Activated CD4-positive, alpha-beta T cell treated with anti-CD3 and anti-CD28 coated beads for 36 hours (primary cell): ENCODE measurements at regions of chr2 and their contacts with region 1.

Region 1: GRCh38 chr2:27079233-27080139 is 1.1 kb downstream of the EMILIN1 start:
- DNase-seq: no peak
- ATAC-seq: no peak
- H3K4me3 Mint-ChIP-seq: no peak overlapping the region
- H3K27ac Mint-ChIP-seq: peak overlapping the region; percentile 83
- H3K4me1 Mint-ChIP-seq: peaks cover 43% of the 10 kb centered on the region
- H3K27me3 Mint-ChIP-seq: no peaks in the 10 kb centered on the region

Region 2: GRCh38 chr2:26970244-26970920 is 109.1 kb before region 1 on chr2 and contains the start of gene MAPRE3:
- CTCF ChIA-PET with region 1: no interaction called
- POLR2A ChIA-PET with region 1: no interaction called
- intact Hi-C with region 1: loop called in 1 of 2 experiments (anchors 1 kb)
- DNase-seq: peak; percentile 86
- ATAC-seq: peak; percentile 93
- H3K4me3 Mint-ChIP-seq: peak within 1 kb of the TSS; percentile 72
- H3K27ac Mint-ChIP-seq: peak within 1 kb of the TSS; percentile 5
- H3K4me1 Mint-ChIP-seq: peaks cover 15% of the 10 kb centered on the region
- H3K27me3 Mint-ChIP-seq: peaks cover 11% of the 10 kb centered on the region
- total RNA-seq, gene MAPRE3: 3.2 to 4.1 TPM